T-cell (primary cell): ENCODE measurements at regions of chr15 and their contacts with region 1.

Region 1: GRCh38 chr15:48861813-48862431 is 16.0 kb upstream of the EID1 start:
- DNase-seq: peak in 27 of 35 experiments; percentile 4 to 80 (median 29)
- ATAC-seq: peak in 3 of 4 experiments; percentile 55 to 71 (median 58)
- H3K4me3 ChIP-seq: no peak overlapping the region
- H3K4me3 Mint-ChIP-seq: no peak overlapping the region
- H3K27ac ChIP-seq: no peak overlapping the region
- H3K27ac Mint-ChIP-seq: no peak overlapping the region
- H3K4me1 ChIP-seq: no peaks in the 10 kb centered on the region
- H3K4me1 Mint-ChIP-seq: peaks cover 0 to 1% (median 0%) of the 10 kb centered on the region in 3 donors
- H3K27me3 ChIP-seq: no peaks in the 10 kb centered on the region
- H3K27me3 Mint-ChIP-seq: peaks cover 10 to 17% of the 10 kb centered on the region in 2 donors

Region 2: GRCh38 chr15:48021336-48022086 is 840.4 kb before region 1 on chr15:
- CTCF ChIA-PET with region 1: no interaction called
- POLR2A ChIA-PET with region 1: no interaction called
- DNase-seq: no peak
- ATAC-seq: no peak
- H3K4me3 ChIP-seq: no peak overlapping the region
- H3K4me3 Mint-ChIP-seq: no peak overlapping the region
- H3K27ac ChIP-seq: no peak overlapping the region
- H3K27ac Mint-ChIP-seq: no peak overlapping the region
- H3K4me1 ChIP-seq: no peaks in the 10 kb centered on the region
- H3K4me1 Mint-ChIP-seq: no peaks in the 10 kb centered on the region
- H3K27me3 ChIP-seq: peaks cover 0 to 2% of the 10 kb centered on the region in 2 experiments
- H3K27me3 Mint-ChIP-seq: peaks cover 2 to 15% of the 10 kb centered on the region in 2 donors

Region 3: DNA sequence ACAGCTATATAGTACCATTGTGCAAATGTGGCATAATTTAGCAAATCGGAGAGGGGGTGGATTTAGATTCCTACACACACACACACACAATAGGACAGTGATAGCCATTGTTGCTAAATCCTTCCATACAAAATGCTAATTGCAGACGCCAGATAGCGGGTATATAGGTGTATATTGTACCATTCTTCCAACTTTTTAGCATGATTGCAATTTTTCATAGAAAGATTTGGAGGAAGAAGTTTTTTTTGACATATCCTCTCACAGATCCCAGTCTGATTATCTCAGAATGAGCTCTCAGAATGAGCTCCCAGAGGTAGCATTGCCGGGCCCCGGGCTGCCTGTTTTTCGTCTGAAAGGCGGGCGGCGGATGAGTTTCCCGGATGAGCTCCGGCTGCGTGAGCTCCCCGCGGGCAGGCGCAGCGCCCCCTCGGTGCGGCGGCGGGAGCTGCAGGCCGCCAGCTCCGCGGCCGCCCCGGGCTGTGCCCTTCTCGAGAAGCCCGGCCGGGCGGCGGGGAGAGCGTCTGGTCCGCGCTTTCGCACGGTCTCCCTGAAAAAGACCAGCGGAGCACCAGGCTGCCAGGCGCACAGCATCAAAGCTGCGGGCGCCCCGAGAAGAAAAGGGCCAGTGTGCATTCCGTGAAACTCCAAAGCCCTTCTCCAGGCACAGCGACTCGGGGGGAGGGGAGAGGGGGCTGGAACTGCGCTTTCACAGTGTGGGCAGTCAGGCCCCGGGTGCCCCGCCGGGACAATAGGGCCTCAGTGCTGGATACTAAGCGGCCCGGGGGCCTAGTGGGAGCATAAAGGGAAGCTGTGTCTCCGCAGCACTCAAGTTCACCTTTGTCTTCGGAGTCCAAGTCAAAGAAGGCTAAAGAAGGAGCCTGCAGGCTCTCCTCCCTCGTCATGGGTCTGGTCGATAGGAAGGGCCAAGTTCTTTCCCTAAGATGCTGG is 113.8 kb after region 1 on chr15:
- CTCF ChIA-PET with region 1: interaction called, 4 to 34 read pairs
- POLR2A ChIA-PET with region 1: no interaction called
- DNase-seq: peak; percentile 37 to 83 (median 62)
- ATAC-seq: peak; percentile 99
- H3K4me3 ChIP-seq: peak overlapping the region; percentile 49 to 50
- H3K4me3 Mint-ChIP-seq: peak overlapping the region; percentile 44 to 58 (median 46)
- H3K27ac ChIP-seq: no peak overlapping the region
- H3K27ac Mint-ChIP-seq: no peak overlapping the region
- H3K4me1 ChIP-seq: peaks cover 0 to 8% of the 10 kb centered on the region in 2 experiments
- H3K4me1 Mint-ChIP-seq: peaks cover 0 to 3% (median 2%) of the 10 kb centered on the region in 3 donors
- H3K27me3 ChIP-seq: peaks cover 0 to 24% of the 10 kb centered on the region in 2 experiments
- H3K27me3 Mint-ChIP-seq: peaks cover 30 to 34% of the 10 kb centered on the region in 2 donors

Region 4: GRCh38 chr15:49145651-49146609 is 284.0 kb after region 1 on chr15:
- CTCF ChIA-PET with region 1: interaction called, 14 to 31 read pairs
- POLR2A ChIA-PET with region 1: no interaction called
- DNase-seq: peak in 17 of 35 experiments; percentile 5 to 63 (median 14)
- ATAC-seq: peak in 2 of 4 experiments; percentile 34 to 57
- H3K4me3 ChIP-seq: no peak overlapping the region
- H3K4me3 Mint-ChIP-seq: no peak overlapping the region
- H3K27ac ChIP-seq: no peak overlapping the region
- H3K27ac Mint-ChIP-seq: no peak overlapping the region
- H3K4me1 ChIP-seq: peaks cover 0 to 6% of the 10 kb centered on the region in 2 experiments
- H3K4me1 Mint-ChIP-seq: peaks cover 50 to 62% (median 53%) of the 10 kb centered on the region in 3 donors
- H3K27me3 ChIP-seq: no peaks in the 10 kb centered on the region
- H3K27me3 Mint-ChIP-seq: no peaks in the 10 kb centered on the region

Region 5: DNA sequence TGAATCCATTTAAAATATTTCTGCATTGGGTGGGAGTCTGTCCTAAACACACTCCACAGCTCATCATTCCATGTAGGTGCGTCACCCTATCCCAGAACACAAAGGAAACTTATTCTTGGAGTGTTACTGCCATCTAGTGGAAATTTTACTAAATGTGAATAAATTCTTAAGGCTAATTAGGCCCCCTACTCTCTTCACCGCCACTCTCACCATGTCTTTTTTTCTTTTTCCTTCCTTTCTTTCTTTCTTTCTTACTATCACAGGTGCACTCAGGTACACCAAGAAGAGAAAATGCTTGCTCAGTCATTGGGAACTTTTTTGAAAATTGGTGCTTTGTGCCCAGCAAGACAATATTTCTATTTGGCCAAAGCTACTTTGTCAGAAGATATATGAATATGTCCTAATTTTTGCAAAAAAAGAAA is 1283.5 kb after region 1 on chr15:
- CTCF ChIA-PET with region 1: interaction called, 9 to 16 read pairs
- POLR2A ChIA-PET with region 1: no interaction called
- DNase-seq: peak in 1 of 35 experiments; percentile 68
- ATAC-seq: peak in 1 of 4 experiments; percentile 45
- H3K4me3 ChIP-seq: no peak overlapping the region
- H3K4me3 Mint-ChIP-seq: no peak overlapping the region
- H3K27ac ChIP-seq: no peak overlapping the region
- H3K27ac Mint-ChIP-seq: no peak overlapping the region
- H3K4me1 ChIP-seq: no peaks in the 10 kb centered on the region
- H3K4me1 Mint-ChIP-seq: no peaks in the 10 kb centered on the region
- H3K27me3 ChIP-seq: peaks cover 0 to 3% of the 10 kb centered on the region in 2 experiments
- H3K27me3 Mint-ChIP-seq: no peaks in the 10 kb centered on the region